ENCODE measurements at regions of chr6 and their contacts with region 1.

Region 1: GRCh38 chr6:41779793-41780545 is at the start of gene FRS3:
- DNase-seq: peak; percentile 92 to 97
- H3K4me3 ChIP-seq: peak within 1 kb of the TSS; percentile 77 to 81 (median 77)
- H3K27ac ChIP-seq: peak within 1 kb of the TSS; percentile 71 to 82
- H3K4me1 ChIP-seq: peaks cover 5% of the 10 kb centered on the region in 2 donors
- H3K27me3 ChIP-seq: no peaks in the 10 kb centered on the region
- CTCF ChIP-seq: peak; percentile 53 to 89 (median 77)
- POLR2A ChIP-seq: no peak
- total RNA-seq, gene FRS3: 3.5 to 4.3 (median 3.8) TPM

Region 2: DNA sequence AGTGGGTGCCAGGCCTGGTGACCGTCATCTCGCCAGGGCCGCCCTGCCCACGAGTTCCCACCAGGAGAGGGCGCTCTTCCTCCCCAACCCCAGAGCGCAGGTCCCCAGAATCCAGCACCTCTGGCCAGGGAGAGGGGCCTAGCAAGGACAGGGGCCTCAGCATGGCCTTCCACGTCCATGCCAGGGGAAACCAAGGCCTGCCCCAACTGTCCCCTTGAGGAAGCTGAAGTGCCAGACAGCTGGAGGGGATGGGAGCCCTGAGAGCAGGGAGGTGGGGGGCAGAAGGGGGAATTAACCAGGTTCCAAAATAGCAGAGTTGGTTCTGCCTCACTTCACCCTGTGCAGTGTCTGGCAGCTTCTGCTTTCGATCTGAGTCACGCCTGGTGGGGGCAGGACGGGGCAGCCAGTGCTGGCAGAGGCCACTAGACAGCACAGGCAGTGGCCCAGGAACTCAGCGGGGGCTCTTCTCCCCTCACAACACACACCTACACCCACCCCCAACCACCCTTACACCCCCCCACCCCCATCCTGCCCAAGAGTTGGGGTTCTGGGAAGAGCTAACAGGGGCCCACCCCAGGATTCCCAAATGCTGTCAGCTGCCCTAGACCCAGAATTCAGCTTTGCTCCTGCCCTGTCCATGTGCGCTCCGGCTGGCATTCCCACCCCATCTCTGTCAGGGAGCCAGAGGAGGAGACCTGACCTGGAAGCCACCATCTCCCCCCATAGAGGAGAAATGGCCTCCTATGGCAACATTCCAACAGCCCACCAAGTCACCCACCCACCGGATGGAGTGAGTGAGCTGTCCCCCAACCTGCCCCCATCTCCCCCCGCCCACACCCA is 73.8 kb before region 1 on chr6:
- intact Hi-C with region 1: loop called (anchors 2 kb)
- DNase-seq: peak in 1 of 2 donors; percentile 69
- H3K4me3 ChIP-seq: no peak overlapping the region
- H3K27ac ChIP-seq: peak overlapping the region; percentile 84 to 88
- H3K4me1 ChIP-seq: peaks cover 20 to 21% of the 10 kb centered on the region in 2 donors
- H3K27me3 ChIP-seq: no peaks in the 10 kb centered on the region
- CTCF ChIP-seq: peak; percentile 17 to 65 (median 36)
- POLR2A ChIP-seq: no peak

Region 3: GRCh38 chr6:42230345-42231321 is 450.7 kb after region 1 on chr6:
- intact Hi-C with region 1: no loop called
- DNase-seq: no peak
- H3K4me3 ChIP-seq: no peak overlapping the region
- H3K27ac ChIP-seq: no peak overlapping the region
- H3K4me1 ChIP-seq: no peaks in the 10 kb centered on the region
- H3K27me3 ChIP-seq: no peaks in the 10 kb centered on the region
- CTCF ChIP-seq: no peak
- POLR2A ChIP-seq: no peak

Measured in breast epithelium (tissue), 4 donors.